Ovary (tissue), 10 donors: ENCODE measurements at regions of chrX and their contacts with region 1.

Region 1: DNA sequence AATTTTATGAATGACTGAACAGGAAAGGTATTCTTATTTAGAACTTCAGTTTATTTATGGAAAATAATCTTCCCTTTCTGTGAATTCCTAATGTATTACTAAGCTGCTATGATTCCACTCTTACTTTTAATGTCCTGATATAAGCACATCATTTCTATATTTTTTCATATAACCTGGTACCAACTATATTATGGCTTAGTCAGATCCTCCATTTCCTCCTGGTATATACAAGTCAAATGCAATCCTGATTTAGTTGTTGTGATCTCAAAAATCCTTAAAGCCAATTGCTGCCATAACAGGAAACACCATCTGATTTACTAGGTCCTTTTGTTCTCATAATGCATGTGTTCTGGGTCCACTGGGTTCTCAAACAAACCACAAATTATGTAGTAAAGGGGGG is 26.8 kb downstream of the TRMT2B start:
- DNase-seq: no peak
- H3K4me3 ChIP-seq: no peak overlapping the region
- H3K27ac ChIP-seq: no peak overlapping the region
- H3K4me1 ChIP-seq: no peaks in the 10 kb centered on the region
- H3K27me3 ChIP-seq: no peaks in the 10 kb centered on the region
- CTCF ChIP-seq: no peak
- EP300 ChIP-seq: no peak
- POLR2A ChIP-seq: no peak

Region 2: DNA sequence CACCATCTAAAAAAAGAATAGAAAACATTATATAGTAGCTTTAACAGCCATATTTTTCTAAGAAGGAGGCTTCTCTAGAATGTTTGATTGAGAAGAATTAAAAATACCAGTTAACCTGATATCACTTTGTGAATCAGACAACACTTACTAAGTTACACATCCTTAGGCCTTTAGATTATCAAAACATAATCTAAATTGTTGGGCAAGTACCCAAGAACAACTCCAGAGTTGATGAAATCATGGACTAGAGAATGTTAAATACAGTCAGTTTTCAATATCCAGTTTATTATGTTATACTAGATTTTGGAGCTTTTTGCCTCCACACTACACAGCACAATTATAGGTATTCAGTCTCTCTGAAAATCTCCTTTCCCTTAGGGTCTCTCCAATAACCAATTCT is 16.0 kb before region 1 on chrX:
- intact Hi-C with region 1: loop called in 1 of 4 experiments (anchors 1 kb)
- DNase-seq: no peak
- H3K4me3 ChIP-seq: no peak overlapping the region
- H3K27ac ChIP-seq: no peak overlapping the region
- H3K4me1 ChIP-seq: no peaks in the 10 kb centered on the region
- H3K27me3 ChIP-seq: no peaks in the 10 kb centered on the region
- CTCF ChIP-seq: no peak
- EP300 ChIP-seq: no peak
- POLR2A ChIP-seq: no peak